ENCODE measurements at regions of chr2 and their contacts with region 1.

Region 1: DNA sequence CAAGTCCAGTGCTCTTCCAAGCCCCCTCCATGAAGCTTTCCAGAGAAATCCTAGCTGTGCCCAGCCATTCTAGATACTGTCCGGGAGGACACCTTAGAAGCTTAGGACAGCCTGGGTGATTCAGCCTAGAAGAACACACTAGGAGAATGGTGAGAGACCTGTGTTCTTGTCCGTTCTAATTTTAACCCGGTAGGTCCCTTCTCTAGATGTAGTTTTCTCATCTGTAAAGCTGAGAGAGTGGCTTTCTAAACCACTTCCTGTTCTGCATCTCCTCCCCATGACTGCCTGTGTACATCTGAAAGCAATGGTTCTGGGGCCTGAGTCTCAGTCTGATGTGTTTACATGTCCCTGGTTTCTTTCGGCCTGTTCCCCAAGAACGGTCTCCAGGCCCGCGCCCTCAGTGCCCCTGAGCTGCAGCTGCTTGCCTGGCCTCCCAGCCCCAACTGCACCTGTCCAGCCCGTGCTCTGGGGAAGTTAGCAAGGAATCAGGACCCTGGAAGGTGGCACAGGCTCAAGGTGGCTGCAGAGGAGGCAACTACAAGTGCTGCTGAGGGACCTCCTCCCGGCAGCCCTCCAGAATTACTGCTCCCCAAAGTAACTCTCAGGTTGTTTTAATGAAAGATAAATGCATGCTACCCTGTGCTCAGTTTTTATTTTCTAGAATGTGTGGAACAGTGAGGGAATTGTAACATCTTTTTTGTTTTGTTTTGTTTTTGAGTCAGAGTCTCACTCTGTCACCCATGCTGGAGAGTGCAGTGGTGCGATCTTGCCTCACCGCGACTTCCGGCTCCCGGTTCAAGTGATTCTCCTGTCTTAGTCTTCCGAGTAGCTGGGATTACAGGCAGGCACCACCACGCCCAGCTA is 105.9 kb downstream of the LBH start:
- DNase-seq: peak; percentile 57
- H3K4me3 ChIP-seq: no peak overlapping the region
- H3K27ac ChIP-seq: peak overlapping the region; percentile 47 to 75 (median 54)
- H3K4me1 ChIP-seq: peaks cover 0 to 14% (median 4%) of the 10 kb centered on the region in 4 donors
- H3K27me3 ChIP-seq: no peaks in the 10 kb centered on the region
- CTCF ChIP-seq: no peak
- EP300 ChIP-seq: no peak
- POLR2A ChIP-seq: no peak

Region 2: DNA sequence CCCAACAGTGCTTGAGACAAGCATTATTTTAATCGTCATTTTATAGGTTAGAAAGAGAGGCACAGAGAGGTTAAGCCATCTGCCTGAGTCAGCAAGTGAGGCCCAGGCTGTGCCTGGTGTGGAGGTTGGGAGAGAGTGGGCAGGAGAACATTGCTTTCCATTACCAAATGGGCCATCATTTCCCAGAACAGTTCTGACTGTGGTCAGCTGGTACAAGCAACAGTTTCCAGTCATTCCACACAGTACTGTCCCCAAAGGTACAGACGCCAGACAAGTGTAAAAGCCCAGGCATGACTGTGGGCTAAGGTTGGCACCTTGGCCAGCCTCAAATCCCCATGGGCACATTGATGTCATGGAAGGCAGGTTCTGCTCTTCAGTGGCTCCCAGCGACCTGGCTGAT is 11.6 kb after region 1 on chr2:
- in situ Hi-C with region 1: no loop called
- intact Hi-C with region 1: loop called (anchors 1 kb)
- DNase-seq: no peak
- H3K4me3 ChIP-seq: no peak overlapping the region
- H3K27ac ChIP-seq: no peak overlapping the region
- H3K4me1 ChIP-seq: peaks cover 0 to 5% (median 0%) of the 10 kb centered on the region in 4 donors
- H3K27me3 ChIP-seq: no peaks in the 10 kb centered on the region
- CTCF ChIP-seq: no peak
- EP300 ChIP-seq: no peak
- POLR2A ChIP-seq: no peak